ENCODE measurements at regions of chr11 and their contacts with region 1.

Region 1: GRCh38 chr11:125923012-125923579 is 18.8 kb downstream of the DDX25 start:
- DNase-seq: peak; percentile 82
- H3K4me3 ChIP-seq: no peak overlapping the region
- H3K27ac ChIP-seq: no peak overlapping the region
- H3K4me1 ChIP-seq: no peaks in the 10 kb centered on the region
- H3K27me3 ChIP-seq: peaks cover 48% of the 10 kb centered on the region

Region 2: DNA sequence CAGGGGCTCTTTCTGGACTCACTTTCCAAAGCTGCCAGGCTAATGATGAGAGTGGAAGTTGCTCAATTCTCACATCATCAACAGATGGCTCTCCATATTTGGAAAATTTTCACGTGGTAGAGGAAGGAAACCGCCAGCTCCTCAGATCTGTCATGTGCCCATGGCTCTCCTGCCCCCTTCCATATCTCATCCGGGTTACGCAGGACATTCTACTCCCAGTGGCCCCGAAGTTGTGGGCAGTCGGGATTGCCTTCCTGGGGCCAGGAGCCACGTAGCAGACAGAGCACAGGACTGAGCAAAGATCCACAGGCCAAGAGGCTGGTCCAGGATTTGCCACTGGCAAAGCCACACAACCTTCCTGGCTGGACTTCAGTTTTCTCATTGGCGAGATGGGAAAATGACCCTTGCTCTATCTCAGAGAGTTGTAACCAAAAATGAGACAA is 249.5 kb after region 1 on chr11:
- in situ Hi-C with region 1: no loop called
- DNase-seq: peak; percentile 85
- H3K4me3 ChIP-seq: no peak overlapping the region
- H3K27ac ChIP-seq: peak overlapping the region; percentile 38
- H3K4me1 ChIP-seq: peaks cover 23% of the 10 kb centered on the region
- H3K27me3 ChIP-seq: no peaks in the 10 kb centered on the region

Region 3: DNA sequence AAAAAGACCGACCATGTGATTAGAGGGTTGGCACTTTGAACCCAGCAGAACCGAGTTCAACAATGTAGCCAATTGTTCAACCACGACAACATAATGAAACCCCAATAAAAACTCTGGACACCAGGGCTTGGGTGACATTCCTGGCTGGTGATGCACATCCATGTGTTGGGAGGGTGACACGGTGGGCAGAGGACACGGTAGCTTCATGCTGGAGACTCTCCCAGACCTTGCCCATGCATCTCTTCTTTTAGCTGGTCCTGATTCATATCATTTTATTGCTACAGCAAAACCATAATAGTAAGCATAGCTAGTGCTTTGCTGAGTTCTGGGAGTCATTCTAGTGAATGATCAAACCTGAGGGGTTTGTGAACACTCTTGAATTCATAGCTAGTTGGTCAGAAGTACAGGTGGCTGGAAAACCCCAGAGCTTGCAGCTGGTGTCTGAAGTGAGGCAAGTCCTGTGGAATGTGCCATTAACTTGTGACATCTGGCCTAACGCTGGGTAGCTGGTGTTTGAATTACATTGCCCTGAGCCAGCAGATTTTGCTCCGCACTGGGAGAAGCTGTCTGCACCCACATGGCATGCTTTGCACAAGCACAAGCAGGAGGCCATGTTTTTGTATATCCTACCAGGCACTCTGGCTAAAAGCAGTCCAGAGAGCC is 274.3 kb after region 1 on chr11:
- in situ Hi-C with region 1: loop called (anchors 5 kb)
- DNase-seq: peak; percentile 8
- H3K4me3 ChIP-seq: no peak overlapping the region
- H3K27ac ChIP-seq: no peak overlapping the region
- H3K4me1 ChIP-seq: no peaks in the 10 kb centered on the region
- H3K27me3 ChIP-seq: no peaks in the 10 kb centered on the region

Measured in GM23248 (cell line).